ENCODE measurements at regions of chr1 and their contacts with region 1.

Region 1: GRCh38 chr1:201282931-201283829 is at the start of gene PKP1:
- DNase-seq: peak; percentile 89
- H3K4me3 ChIP-seq: peak within 1 kb of the TSS; percentile 79 to 98 (median 91)
- H3K27ac ChIP-seq: peak within 1 kb of the TSS; percentile 89
- H3K4me1 ChIP-seq: peaks cover 46% of the 10 kb centered on the region
- H3K27me3 ChIP-seq: no peaks in the 10 kb centered on the region
- CTCF ChIP-seq: peak in 1 of 2 donors; percentile 24
- total RNA-seq, gene PKP1: 102 to 201 TPM

Region 2: GRCh38 chr1:201184307-201185122 is 98.7 kb before region 1 on chr1:
- CTCF ChIA-PET with region 1: no interaction called
- dilution Hi-C with region 1: no loop called
- in situ Hi-C with region 1: no loop called
- intact Hi-C with region 1: no loop called
- DNase-seq: peak; percentile 67
- H3K4me3 ChIP-seq: no peak overlapping the region
- H3K27ac ChIP-seq: no peak overlapping the region
- H3K4me1 ChIP-seq: peaks cover 12% of the 10 kb centered on the region
- H3K27me3 ChIP-seq: no peaks in the 10 kb centered on the region
- CTCF ChIP-seq: peak; percentile 67 to 79

Region 3: DNA sequence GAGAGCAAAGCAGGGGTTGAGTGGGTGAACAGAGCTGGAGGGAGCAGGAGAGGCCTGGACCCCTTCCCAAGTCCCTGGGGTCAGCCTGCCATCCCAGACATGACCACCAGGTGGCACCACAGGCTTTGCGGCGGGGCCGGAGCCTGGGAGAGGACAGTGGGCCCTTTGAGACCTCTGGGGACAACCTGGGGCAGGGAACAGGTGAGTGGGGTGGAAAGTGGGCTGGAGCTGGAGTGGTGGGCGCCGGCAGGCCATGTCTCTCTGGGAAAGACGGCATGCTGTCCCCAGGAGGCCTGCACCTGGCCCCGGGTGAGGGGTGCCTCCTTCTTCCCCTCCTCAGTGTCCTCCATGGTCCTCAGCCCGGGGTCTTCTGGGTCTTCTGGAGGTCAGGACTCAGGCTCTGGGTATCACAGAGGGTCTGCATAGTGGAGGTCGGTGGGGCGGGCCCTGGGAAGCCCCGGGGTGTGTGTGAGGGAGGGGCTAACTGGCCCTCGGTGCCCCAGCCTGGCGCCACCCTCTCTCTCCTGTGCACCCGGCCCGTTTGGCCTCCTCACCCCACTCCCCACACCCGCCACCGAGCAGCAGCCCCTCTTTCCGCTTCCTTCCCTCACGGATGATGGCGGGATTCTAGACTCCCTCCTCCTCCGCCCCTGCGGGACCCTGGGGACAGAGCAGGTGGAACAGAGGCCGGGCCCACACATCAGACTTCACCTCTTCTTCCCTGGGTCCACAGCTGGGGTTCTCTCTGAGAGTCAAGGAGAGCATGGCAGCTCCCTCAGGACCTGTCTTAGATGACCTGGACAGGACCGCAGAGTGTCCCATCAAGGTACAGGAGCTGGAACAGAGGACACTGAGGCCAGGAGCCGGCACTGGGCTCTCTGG is 28.3 kb before region 1 on chr1:
- CTCF ChIA-PET with region 1: interaction called, 3 read pairs
- dilution Hi-C with region 1: no loop called
- in situ Hi-C with region 1: no loop called
- intact Hi-C with region 1: loop called (anchors 1 kb)
- DNase-seq: peak; percentile 34
- H3K4me3 ChIP-seq: no peak overlapping the region
- H3K27ac ChIP-seq: no peak overlapping the region
- H3K4me1 ChIP-seq: peaks cover 11% of the 10 kb centered on the region
- H3K27me3 ChIP-seq: no peaks in the 10 kb centered on the region
- CTCF ChIP-seq: peak; percentile 89 to 99

Region 4: GRCh38 chr1:201268604-201269151 is 14.5 kb before region 1 on chr1:
- CTCF ChIA-PET with region 1: no interaction called
- dilution Hi-C with region 1: no loop called
- in situ Hi-C with region 1: no loop called
- intact Hi-C with region 1: loop called (anchors 1 kb)
- DNase-seq: peak; percentile 80
- H3K4me3 ChIP-seq: no peak overlapping the region
- H3K27ac ChIP-seq: peak overlapping the region; percentile 94
- H3K4me1 ChIP-seq: peaks cover 42% of the 10 kb centered on the region
- H3K27me3 ChIP-seq: no peaks in the 10 kb centered on the region
- CTCF ChIP-seq: no peak

Region 5: DNA sequence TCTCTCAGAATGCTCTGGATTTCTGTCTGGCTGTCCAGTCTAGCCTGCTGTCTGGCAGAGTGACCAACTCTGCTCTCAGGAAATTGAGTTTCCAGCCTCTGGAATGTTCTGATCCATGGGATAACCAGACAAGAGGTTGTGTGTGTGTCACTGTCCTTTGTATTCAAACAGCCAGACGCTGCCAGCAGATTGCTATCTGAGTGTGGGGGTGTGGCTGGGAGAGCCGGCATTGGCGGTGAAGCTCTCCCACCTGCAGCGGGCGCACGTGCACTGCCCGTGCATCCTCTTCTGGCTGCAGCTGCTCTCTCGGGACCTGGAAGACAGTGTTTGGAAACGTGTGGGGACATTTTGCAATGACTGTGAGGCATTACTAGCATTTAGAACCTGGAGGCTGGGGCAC is 26.2 kb after region 1 on chr1:
- CTCF ChIA-PET with region 1: no interaction called
- dilution Hi-C with region 1: no loop called
- in situ Hi-C with region 1: no loop called
- intact Hi-C with region 1: loop called (anchors 1 kb)
- DNase-seq: peak; percentile 94
- H3K4me3 ChIP-seq: no peak overlapping the region
- H3K27ac ChIP-seq: peak overlapping the region; percentile 98
- H3K4me1 ChIP-seq: peaks cover 64% of the 10 kb centered on the region
- H3K27me3 ChIP-seq: no peaks in the 10 kb centered on the region
- CTCF ChIP-seq: peak in 1 of 2 donors; percentile 30

Region 6: DNA sequence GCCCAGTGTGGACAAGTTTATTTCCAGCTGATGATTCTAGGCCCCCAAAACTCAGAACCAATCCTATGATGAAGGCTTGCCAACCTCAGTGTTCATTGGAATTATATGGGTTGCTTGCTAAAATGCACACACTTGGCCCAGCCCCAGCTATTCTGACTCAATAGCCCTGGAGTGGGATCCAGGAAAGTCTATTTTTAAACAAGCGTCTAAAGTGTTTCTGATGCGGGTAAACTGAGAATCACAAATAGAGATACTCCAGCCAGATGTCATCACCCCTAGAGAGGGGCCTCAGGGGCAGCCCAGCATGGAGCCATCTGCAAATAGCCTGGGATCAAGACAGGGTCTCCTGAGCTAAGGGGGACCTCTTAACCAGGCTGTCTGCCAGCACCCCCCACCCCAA is 46.1 kb after region 1 on chr1:
- CTCF ChIA-PET with region 1: no interaction called
- dilution Hi-C with region 1: no loop called
- in situ Hi-C with region 1: no loop called
- intact Hi-C with region 1: no loop called
- DNase-seq: no peak
- H3K4me3 ChIP-seq: no peak overlapping the region
- H3K27ac ChIP-seq: no peak overlapping the region
- H3K4me1 ChIP-seq: peaks cover 12% of the 10 kb centered on the region
- H3K27me3 ChIP-seq: no peaks in the 10 kb centered on the region
- CTCF ChIP-seq: no peak

Region 7: DNA sequence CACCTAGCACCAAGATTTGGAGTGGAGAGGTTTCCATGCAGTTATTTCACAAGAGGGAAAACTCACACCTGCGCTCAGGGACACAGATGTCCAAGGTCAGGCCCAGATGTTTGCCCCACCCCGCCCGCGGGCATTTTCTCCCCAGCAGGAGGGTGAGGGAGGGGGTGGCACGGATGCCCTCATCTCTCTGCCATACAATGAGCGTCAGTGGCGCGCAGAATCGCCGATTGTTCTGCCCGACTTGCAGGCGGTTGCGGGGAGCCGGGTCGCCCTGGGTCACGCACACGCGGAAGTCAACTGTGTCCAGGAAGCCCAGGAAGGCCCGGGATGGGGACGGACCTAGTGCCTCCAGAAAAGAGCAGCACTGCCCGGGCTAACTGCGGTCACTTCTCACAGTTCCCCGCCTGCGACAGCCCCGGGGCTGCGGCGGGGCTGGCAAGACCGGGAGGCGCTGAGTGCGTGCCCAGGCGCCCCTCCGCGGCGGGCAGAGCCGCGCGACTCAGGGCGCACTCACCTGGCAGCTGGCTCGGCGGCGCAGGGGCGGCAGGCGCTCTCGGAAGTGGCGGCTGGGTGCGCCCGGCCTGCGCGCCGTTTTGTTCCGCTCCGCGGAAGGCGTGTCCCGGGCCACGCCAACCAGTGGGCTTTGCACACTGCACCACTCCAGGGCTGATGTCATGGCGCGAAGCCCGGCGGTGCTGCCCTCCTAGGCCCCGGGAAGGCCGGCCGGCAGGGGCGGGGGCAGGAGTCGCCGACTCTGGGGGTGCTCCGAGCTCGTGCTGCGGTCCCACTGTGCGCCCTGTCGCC is 223.6 kb after region 1 on chr1 and contains the start of gene CSRP1:
- CTCF ChIA-PET with region 1: no interaction called
- dilution Hi-C with region 1: no loop called
- in situ Hi-C with region 1: no loop called
- intact Hi-C with region 1: loop called (anchors 10 kb)
- DNase-seq: peak; percentile 84
- H3K4me3 ChIP-seq: peak within 1 kb of the TSS; percentile 63 to 70 (median 67)
- H3K27ac ChIP-seq: peak within 1 kb of the TSS; percentile 72
- H3K4me1 ChIP-seq: peaks cover 54% of the 10 kb centered on the region
- H3K27me3 ChIP-seq: no peaks in the 10 kb centered on the region
- CTCF ChIP-seq: peak in 1 of 2 donors; percentile 20
- total RNA-seq, gene CSRP1: 145 to 609 TPM

Measured in mammary epithelial cell (primary cell).